Naive thymus-derived CD4-positive, alpha-beta T cell (primary cell): ENCODE measurements at regions of chr12 and their contacts with region 1.

Region 1: DNA sequence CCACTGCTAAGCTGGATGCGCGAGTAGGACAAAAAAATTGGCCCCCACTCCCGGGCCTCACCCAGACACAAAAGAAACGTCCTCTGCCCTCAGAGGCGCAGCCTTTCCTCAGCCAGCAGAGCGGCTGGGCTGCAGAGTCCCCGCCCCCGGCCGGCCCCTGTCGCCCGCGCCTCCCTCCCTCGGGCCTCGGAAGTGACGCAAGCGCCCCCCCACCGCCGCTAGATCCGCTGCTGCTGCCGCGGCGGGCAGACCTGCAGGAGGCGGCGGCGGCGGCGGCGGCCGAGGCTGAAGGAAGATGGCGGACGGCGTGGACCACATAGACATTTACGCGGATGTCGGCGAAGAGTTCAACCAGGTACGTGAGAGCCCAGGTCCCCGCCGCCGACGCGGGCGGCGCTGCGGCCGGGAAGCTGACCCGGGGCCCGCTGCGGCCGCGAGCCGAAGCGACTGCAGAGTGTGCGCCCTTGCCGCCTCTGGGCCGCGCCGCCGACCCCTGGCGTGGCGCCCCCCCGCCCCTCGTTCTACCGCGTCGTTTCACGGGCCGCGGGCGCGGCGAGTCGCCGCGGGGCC is at the start of gene CPSF6:
- DNase-seq: peak; percentile 93 to 97 (median 95)
- ATAC-seq: peak; percentile 96
- H3K4me3 ChIP-seq: peak within 1 kb of the TSS; percentile 86
- H3K4me3 Mint-ChIP-seq: peak within 1 kb of the TSS; percentile 94 to 100 (median 98)
- H3K27ac ChIP-seq: peak within 1 kb of the TSS; percentile 90
- H3K27ac Mint-ChIP-seq: peak within 1 kb of the TSS; percentile 96 to 100 (median 99)
- H3K4me1 ChIP-seq: peaks cover 32 to 37% of the 10 kb centered on the region in 2 donors
- H3K4me1 Mint-ChIP-seq: peaks cover 32 to 58% (median 54%) of the 10 kb centered on the region in 7 donors
- H3K27me3 ChIP-seq: no peaks in the 10 kb centered on the region
- H3K27me3 Mint-ChIP-seq: no peaks in the 10 kb centered on the region
- total RNA-seq, gene CPSF6: 86.8 to 127 (median 96.5) TPM

Region 2: DNA sequence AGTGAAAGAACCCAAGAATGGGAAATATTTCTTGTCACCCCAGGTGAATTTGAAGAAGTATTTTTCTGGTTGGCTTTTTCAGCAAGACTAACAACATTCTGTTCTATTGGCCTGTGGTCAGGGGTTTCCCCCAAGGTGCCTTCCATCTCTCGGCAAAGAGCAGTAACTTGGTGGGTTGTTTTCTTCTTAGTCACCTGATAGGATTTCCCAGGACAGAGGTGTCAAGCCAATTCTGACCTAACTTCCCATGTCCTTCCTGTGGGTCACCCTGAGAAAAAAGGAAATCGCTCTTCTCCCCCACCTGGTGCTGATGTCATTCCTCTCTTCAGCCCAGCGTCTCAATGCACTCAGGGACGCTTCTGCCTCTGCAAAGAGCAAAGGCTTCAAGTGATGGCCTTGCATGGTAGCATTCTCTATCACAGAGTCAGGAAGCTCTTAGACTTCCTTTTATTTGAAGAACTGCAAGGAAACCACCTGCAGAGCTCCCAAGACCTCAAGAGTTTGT is 1063.8 kb before region 1 on chr12:
- CTCF ChIA-PET with region 1: no interaction called
- POLR2A ChIA-PET with region 1: no interaction called
- intact Hi-C with region 1: loop called in 1 of 2 experiments (anchors 5 kb)
- DNase-seq: peak; percentile 35 to 90 (median 86)
- ATAC-seq: peak; percentile 93
- H3K4me3 ChIP-seq: peak overlapping the region; percentile 40
- H3K4me3 Mint-ChIP-seq: peak overlapping the region; percentile 69 to 86 (median 84)
- H3K27ac ChIP-seq: peak overlapping the region; percentile 78
- H3K27ac Mint-ChIP-seq: peak overlapping the region; percentile 87 to 97 (median 93)
- H3K4me1 ChIP-seq: peaks cover 20 to 65% of the 10 kb centered on the region in 2 donors
- H3K4me1 Mint-ChIP-seq: peaks cover 30 to 82% (median 67%) of the 10 kb centered on the region in 7 donors
- H3K27me3 ChIP-seq: no peaks in the 10 kb centered on the region
- H3K27me3 Mint-ChIP-seq: no peaks in the 10 kb centered on the region

Region 3: DNA sequence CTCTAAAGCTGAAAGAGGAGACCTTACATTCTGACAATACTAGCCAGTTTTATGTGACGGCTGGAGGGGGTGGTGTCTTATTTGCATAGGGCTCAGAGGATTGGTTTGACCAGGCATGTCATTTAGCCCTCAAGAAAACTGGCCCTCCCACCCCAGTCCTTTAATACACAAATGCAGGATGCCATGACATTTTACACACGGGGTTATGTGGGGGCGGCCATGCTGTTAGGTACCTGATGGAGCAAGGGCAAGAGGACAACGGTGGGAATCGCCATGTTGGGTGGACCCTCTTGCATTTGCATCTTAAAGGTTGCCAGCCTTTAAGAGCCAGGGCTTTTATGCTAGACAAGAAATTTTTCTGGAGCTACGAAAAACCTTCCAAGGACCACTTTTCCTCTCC is 408.2 kb before region 1 on chr12:
- CTCF ChIA-PET with region 1: no interaction called
- POLR2A ChIA-PET with region 1: no interaction called
- intact Hi-C with region 1: loop called in 1 of 2 experiments (anchors 10 kb)
- DNase-seq: no peak
- ATAC-seq: no peak
- H3K4me3 ChIP-seq: no peak overlapping the region
- H3K4me3 Mint-ChIP-seq: no peak overlapping the region
- H3K27ac ChIP-seq: no peak overlapping the region
- H3K27ac Mint-ChIP-seq: peak overlapping the region in 1 of 9 donors; percentile 62
- H3K4me1 ChIP-seq: no peaks in the 10 kb centered on the region
- H3K4me1 Mint-ChIP-seq: peaks cover 8 to 25% (median 20%) of the 10 kb centered on the region in 7 donors
- H3K27me3 ChIP-seq: no peaks in the 10 kb centered on the region
- H3K27me3 Mint-ChIP-seq: no peaks in the 10 kb centered on the region

Region 4: DNA sequence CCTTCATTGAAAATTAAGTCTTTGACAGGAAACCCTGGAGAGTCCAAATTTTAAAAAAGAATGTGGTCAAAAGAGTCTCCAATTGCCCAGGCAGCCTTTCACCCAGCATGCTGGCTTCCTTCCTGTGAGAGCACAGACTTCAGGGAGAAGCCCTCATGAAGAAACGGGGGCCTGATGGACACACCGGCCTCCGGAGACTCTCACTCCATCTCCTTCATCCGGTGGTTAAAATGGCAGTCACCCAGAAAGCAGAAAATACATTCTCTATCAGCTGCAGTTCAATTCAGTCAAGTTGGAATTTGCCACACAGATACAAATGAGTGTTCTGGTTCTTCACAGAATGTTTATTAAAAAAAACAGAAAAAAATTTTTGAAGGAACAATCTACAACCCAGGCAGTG is 363.0 kb before region 1 on chr12:
- CTCF ChIA-PET with region 1: no interaction called
- POLR2A ChIA-PET with region 1: no interaction called
- intact Hi-C with region 1: no loop called
- DNase-seq: no peak
- ATAC-seq: no peak
- H3K4me3 ChIP-seq: no peak overlapping the region
- H3K4me3 Mint-ChIP-seq: no peak overlapping the region
- H3K27ac ChIP-seq: no peak overlapping the region
- H3K27ac Mint-ChIP-seq: peak overlapping the region in 1 of 9 donors; percentile 23
- H3K4me1 ChIP-seq: no peaks in the 10 kb centered on the region
- H3K4me1 Mint-ChIP-seq: peaks cover 0 to 8% (median 0%) of the 10 kb centered on the region in 7 donors
- H3K27me3 ChIP-seq: no peaks in the 10 kb centered on the region
- H3K27me3 Mint-ChIP-seq: peaks cover 0 to 6% (median 0%) of the 10 kb centered on the region in 5 donors

Region 5: DNA sequence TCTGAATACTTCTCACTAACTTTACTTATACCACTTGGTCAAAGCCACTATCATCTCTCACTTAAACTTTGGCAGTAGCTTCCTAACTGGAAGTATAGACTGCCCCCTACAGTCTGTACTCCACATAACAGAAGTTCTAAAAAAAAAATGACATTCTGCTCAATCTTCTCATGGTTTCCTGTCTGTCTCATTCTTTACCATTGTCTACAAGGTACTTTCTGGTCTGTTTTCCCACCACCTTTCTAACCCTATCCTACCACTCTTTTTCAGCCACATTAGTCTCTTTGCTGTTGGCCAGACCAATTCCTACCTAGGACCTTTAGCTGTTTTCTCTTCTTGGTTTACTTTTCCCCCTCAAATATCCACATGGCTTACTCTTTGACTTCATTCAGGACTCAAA is 14.6 kb after region 1 on chr12:
- CTCF ChIA-PET with region 1: interaction called, 7 read pairs
- POLR2A ChIA-PET with region 1: interaction called, 9 read pairs
- intact Hi-C with region 1: loop called (anchors 1 kb)
- DNase-seq: peak in 7 of 9 donors; percentile 55 to 76 (median 67)
- ATAC-seq: peak; percentile 94
- H3K4me3 ChIP-seq: no peak overlapping the region
- H3K4me3 Mint-ChIP-seq: no peak overlapping the region
- H3K27ac ChIP-seq: peak overlapping the region; percentile 33
- H3K27ac Mint-ChIP-seq: peak overlapping the region; percentile 18 to 93 (median 53)
- H3K4me1 ChIP-seq: peaks cover 0 to 4% of the 10 kb centered on the region in 2 donors
- H3K4me1 Mint-ChIP-seq: peaks cover 19 to 56% (median 54%) of the 10 kb centered on the region in 7 donors
- H3K27me3 ChIP-seq: no peaks in the 10 kb centered on the region
- H3K27me3 Mint-ChIP-seq: no peaks in the 10 kb centered on the region

Region 6: DNA sequence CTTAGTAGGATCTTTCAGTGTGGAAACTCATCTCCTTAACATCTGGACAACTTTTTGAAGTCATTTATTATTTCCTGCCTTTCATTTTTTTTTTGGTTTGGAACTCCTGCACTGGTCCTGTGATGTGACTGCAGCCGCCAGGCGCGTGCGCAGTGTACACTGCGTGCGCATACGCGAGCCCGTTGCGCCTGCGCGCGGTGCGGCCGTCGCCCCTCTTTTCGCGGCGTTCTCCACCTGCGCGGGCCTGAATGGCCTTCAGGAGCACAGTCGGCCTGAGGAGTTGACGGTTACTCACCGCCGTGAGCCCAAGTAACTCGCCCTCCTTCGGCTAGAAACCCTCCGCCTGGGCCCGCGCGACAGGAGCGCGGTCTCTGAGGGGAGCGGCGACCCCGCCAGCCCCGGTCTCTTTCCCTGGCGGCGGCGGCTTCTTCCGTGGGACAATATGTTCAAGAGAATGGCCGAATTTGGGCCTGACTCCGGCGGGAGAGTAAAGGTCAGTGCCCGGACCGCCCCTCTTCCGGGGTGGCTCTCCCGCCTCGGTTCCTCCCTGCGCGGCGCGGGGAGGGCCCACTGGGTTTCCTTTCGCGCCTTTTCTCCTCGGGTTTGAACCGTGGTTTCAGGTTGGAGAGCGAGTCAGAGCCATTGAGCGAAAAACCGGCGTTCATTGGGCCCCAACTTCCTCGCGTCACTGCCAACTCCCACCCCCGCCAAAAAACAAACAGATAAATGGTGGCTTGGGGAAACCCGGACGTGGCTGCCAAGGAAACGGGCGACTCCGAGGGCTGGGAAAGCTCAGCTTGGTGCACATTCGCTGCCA is 120.3 kb after region 1 on chr12 and contains the start of gene YEATS4:
- CTCF ChIA-PET with region 1: interaction called, 3 read pairs
- POLR2A ChIA-PET with region 1: no interaction called
- intact Hi-C with region 1: loop called (anchors 1 to 2 kb)
- DNase-seq: peak; percentile 73 to 93 (median 84)
- ATAC-seq: peak; percentile 86
- H3K4me3 ChIP-seq: peak within 1 kb of the TSS; percentile 76
- H3K4me3 Mint-ChIP-seq: peak within 1 kb of the TSS; percentile 82 to 93 (median 89)
- H3K27ac ChIP-seq: peak within 1 kb of the TSS; percentile 93
- H3K27ac Mint-ChIP-seq: peak within 1 kb of the TSS; percentile 80 to 96 (median 91)
- H3K4me1 ChIP-seq: peaks cover 5 to 6% of the 10 kb centered on the region in 2 donors
- H3K4me1 Mint-ChIP-seq: peaks cover 11 to 32% (median 25%) of the 10 kb centered on the region in 7 donors
- H3K27me3 ChIP-seq: no peaks in the 10 kb centered on the region
- H3K27me3 Mint-ChIP-seq: peaks cover 0 to 3% (median 0%) of the 10 kb centered on the region in 5 donors
- total RNA-seq, gene YEATS4: 16.5 to 34.9 (median 21.4) TPM

Region 7: DNA sequence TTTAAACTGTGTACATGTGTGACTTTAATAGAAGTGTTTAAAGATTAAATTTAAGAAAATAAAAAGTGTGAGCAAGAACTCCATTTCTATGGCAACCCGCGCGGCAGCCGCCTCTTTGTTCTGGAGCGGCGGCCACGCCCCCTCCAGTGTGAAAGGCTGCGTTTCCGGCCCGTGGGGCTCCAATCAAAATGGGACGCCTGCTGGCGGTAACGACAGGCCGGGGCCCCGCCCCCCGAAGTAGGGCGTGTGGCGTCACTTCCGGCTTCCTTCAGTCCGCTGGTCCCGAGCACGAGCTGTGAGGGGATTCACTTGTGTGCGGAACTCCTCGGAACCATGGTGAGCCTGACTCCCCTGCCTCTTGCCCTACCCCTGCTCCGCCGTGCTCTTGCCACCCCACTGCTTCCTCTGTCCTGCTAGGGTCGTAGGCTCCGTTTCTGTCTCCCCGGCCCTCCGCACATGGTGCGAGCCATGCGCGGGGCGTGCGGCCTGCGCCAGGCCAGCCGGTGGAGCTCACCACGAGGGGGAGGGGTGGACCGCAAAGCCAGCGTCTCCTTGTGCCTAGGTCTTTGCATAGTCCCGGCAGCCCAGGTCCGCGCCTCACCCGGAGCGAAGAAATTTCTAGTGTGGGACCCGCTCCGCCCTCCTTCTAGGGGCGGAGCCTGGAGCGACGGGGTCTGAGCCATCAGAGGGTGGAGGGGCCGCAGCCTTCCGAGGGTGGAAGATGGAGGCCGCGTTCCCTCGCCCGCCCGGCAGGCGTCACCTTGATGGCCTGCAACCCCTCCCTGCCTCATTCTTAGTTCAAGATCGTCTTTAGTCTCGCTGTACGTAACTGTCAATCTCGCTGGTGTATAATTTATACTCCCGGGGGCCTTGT is 346.0 kb after region 1 on chr12 and contains the start of gene CCT2:
- CTCF ChIA-PET with region 1: no interaction called
- POLR2A ChIA-PET with region 1: no interaction called
- intact Hi-C with region 1: loop called (anchors 1 kb)
- DNase-seq: peak; percentile 88 to 96 (median 95)
- ATAC-seq: peak; percentile 97
- H3K4me3 ChIP-seq: peak within 1 kb of the TSS; percentile 100
- H3K4me3 Mint-ChIP-seq: peak within 1 kb of the TSS; percentile 84 to 97 (median 95)
- H3K27ac ChIP-seq: peak within 1 kb of the TSS; percentile 96
- H3K27ac Mint-ChIP-seq: peak within 1 kb of the TSS; percentile 91 to 98 (median 97)
- H3K4me1 ChIP-seq: peaks cover 7 to 11% of the 10 kb centered on the region in 2 donors
- H3K4me1 Mint-ChIP-seq: peaks cover 9 to 28% (median 17%) of the 10 kb centered on the region in 7 donors
- H3K27me3 ChIP-seq: no peaks in the 10 kb centered on the region
- H3K27me3 Mint-ChIP-seq: no peaks in the 10 kb centered on the region
- total RNA-seq, gene CCT2: 106 to 200 (median 157) TPM